ENCODE measurements at regions of chr10 and their contacts with region 1.

Region 1: DNA sequence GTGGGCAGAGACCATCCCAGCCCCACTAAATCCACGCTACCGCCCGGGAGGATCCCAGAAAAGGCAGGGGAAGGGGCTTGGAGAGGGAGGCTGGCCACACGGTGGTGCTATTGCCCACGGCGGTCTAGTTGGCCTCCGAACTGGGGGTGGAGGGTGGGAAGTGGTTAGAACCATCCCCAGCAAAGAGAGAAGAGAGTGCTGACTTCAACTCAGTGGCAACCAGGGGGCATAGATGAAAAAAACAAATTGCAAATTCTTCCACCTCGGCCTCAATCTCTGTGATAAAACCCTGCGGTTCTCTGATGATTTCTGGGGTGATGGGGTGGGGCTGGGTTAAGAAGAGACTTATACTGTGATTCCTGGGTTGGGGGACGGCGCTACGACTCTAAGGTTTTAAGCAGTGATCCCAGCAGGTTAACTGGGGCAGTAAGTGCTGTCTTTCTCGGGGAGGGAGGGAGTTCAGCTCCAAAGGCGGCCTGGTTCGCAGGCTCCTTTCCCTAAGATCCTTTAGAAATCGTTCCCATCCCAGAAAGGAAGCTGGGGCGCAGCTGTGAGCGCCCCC is 154.5 kb upstream of the LYZL2 start:
- DNase-seq: peak; percentile 89
- H3K4me3 Mint-ChIP-seq: peak overlapping the region; percentile 66
- H3K27ac Mint-ChIP-seq: peak overlapping the region; percentile 60
- H3K4me1 Mint-ChIP-seq: peaks cover 21% of the 10 kb centered on the region
- H3K27me3 Mint-ChIP-seq: peaks cover 25% of the 10 kb centered on the region

Region 2: DNA sequence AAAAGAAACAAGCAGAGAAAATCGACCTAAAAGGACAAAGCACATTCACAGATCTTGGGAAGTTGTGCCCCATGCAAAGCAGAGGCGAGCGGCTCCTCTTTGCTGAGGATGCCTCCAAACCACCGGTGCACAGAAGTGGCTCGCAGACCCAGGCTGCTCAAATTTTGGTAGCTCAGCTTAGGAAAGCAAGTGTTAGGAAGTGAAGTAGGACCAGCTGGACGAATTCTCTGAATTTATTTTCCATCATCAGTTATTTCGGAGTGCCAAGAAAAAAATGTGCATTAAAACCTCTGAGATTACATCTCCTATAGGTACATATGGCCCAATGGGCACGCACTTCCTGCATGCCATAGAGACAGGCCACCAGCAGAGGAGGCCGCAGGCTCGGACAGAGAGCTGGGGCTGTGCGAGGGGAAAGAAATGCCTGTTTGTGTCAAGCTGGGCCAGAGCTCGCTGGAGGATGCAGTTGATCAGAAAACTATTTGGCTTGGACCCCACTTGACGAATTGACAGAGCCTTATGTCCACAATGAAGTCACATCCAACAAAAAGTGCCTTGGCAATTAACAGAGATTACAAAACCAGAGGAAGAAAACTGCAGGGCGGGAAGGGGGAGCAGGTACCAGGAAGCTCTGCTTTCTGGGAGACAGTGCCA is 32.2 kb before region 1 on chr10:
- CTCF ChIA-PET with region 1: interaction called, 12 read pairs
- DNase-seq: peak; percentile 73
- H3K4me3 Mint-ChIP-seq: no peak overlapping the region
- H3K27ac Mint-ChIP-seq: no peak overlapping the region
- H3K4me1 Mint-ChIP-seq: peaks cover 24% of the 10 kb centered on the region
- H3K27me3 Mint-ChIP-seq: peaks cover 12% of the 10 kb centered on the region

Region 3: DNA sequence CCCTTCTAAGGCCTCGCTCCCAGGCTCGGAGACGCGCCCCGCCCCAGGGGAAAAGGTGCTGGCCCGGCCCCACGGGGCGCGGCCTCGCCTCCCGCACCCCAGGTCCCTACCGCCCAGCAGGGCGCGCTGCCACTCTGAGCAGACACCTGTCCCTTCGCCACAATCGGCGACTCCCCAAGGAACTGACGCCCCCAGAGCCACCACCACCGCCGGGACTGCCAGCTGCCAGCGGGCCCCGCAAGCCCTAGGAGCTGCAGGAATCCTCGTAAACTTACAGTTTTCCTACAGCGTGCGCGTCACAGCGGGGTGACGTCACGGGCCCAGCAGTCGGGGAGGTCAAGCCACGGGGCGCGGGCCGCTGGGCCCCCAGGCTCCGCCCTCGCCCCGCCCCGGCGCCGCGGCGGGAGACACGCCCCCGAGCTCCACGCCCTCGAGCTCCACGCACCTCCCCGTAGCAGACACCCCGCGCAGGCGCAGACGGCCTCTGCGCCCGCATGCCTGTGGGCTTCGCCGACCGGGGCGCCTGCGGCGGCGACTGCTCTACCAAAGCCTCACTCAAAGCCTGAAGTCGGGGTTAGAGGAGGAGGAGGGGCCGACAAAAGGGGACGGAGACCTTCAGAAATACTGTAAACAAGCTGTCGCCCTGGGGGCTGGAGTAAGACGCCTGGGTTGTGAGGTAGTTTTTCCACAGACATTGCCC is 247.7 kb after region 1 on chr10 and contains the start of gene ZNF438:
- CTCF ChIA-PET with region 1: interaction called, 14 read pairs
- DNase-seq: peak; percentile 94
- H3K4me3 Mint-ChIP-seq: peak within 1 kb of the TSS; percentile 79
- H3K27ac Mint-ChIP-seq: peak within 1 kb of the TSS; percentile 97
- H3K4me1 Mint-ChIP-seq: peaks cover 18% of the 10 kb centered on the region
- H3K27me3 Mint-ChIP-seq: no peaks in the 10 kb centered on the region

Region 4: DNA sequence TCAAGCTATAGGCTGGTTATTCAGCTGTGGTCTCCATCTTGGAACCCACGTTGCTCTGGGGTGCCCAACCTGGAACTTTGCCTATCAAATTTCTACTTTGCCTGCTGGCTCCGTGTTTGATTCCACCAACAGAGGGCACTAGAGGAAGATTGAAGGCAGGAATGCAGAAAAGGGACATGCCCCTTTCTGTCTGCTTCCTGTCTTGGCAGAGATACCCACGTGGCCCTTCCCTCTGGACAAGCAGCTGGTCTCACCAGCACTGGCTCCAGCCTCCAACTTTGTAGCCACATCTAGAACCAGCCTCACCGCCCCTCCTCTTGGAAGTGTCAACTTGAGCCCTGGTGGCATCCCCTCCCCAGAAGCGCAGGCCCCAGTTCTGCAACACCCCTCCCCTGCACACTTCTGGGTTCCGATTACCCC is 299.8 kb after region 1 on chr10:
- CTCF ChIA-PET with region 1: interaction called, 16 read pairs
- DNase-seq: peak; percentile 71
- H3K4me3 Mint-ChIP-seq: no peak overlapping the region
- H3K27ac Mint-ChIP-seq: no peak overlapping the region
- H3K4me1 Mint-ChIP-seq: peaks cover 6% of the 10 kb centered on the region
- H3K27me3 Mint-ChIP-seq: no peaks in the 10 kb centered on the region

Region 5: GRCh38 chr10:31490858-31491504 is 707.0 kb after region 1 on chr10:
- CTCF ChIA-PET with region 1: interaction called, 18 read pairs
- DNase-seq: peak; percentile 33
- H3K4me3 Mint-ChIP-seq: no peak overlapping the region
- H3K27ac Mint-ChIP-seq: no peak overlapping the region
- H3K4me1 Mint-ChIP-seq: no peaks in the 10 kb centered on the region
- H3K27me3 Mint-ChIP-seq: no peaks in the 10 kb centered on the region

Region 6: DNA sequence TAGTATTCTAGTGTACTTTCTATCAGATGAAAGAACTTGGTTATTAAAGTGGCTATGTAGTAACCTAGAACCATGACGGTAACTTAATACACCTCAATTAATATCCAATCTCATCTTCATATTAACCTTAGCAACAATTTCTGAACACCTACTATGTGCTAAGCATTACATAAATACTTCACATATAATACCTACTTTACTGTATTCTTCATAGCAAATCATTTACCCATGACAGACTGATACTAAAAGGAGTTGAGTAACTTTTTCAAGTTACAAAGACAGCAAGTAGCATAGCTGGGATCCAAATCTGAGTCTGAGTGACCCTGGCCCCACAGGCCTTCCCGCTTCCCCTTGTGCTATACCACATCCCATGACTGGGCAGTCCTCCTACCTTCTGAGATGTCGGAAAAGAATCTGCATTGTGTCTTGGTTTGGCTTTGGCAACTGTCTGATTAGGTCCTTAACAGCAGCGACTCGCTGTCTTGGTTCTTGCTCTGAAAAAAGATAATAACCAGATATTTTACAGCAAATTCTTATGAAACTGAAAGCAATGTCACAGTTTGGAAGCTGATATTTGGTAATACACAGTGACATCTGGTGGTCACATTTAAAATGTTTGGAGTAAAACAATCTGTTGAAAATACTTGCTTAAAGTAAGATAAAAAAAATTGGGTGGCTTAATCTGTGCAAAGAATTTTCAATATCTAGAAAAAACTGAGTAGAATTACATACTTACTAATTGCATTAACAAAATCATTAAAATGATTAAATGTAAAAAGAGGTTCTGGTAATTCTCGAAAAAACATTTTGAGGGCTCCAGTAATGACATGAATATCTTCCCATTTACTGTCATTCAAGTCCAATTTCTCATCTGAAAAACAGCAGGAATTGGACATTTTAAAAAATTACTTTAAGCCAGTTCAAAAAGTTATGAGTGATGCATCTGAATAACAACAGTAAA is 1024.5 kb after region 1 on chr10:
- CTCF ChIA-PET with region 1: interaction called, 19 read pairs
- DNase-seq: peak; percentile 23
- H3K4me3 Mint-ChIP-seq: no peak overlapping the region
- H3K27ac Mint-ChIP-seq: peak overlapping the region; percentile 74
- H3K4me1 Mint-ChIP-seq: peaks cover 6% of the 10 kb centered on the region
- H3K27me3 Mint-ChIP-seq: no peaks in the 10 kb centered on the region

Measured in activated naive CD4-positive, alpha-beta T cell treated with anti-CD3 and anti-CD28 coated beads, Interleukin-2, amount 10 ng/mL, durations not matched to agents 7 days and 5 days (primary cell).